Testis (tissue), 5 donors: ENCODE measurements at regions of chr2 and their contacts with region 1.

Region 1: DNA sequence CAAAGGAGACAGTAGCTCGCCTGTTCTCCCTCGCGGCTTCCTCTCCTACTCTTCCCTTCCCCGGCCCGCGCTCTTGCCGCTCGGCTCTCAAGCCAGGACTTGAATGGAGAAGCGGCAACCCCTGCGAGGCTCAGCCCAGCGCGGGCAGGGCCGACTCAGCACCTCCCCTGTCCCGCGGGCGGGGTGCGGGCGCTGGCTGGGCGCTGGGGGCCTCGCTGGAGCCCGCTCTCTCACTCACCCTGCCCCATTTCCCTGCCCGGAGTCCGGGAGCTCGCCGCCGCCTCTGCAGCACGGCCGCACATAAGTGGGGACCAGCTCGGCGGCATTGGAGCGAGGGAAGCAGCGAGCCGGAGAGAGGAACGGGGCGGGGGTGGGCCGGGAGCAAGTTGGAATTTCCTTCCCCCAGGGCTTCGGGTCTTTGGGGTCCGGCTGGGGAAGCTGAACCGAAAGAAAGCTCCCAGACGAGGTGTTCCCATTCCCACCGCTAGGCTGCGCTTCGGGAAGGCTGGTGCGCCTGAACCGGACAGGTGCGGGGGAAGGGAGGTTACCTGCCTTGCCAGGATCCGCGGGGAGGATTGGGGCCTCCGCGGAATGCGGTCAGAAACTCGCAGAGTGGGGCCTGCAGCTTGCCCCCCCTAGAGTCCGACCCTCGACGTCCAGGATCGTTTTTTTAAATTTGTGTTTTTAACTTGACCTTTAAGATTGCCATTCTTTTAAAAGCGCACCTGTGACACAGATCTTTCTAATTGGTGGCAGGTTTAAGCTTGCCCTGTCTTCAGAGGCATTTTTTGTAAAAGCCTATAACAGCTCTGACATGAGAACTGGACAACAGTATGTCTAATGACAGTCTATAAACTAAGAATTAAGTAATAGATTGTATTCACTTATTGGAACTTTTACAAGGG is at the start of gene COBLL1:
- DNase-seq: peak; percentile 84
- H3K4me3 ChIP-seq: peak within 1 kb of the TSS; percentile 69 to 78
- H3K27ac ChIP-seq: peak within 1 kb of the TSS; percentile 83 to 90
- H3K4me1 ChIP-seq: no peaks in the 10 kb centered on the region
- H3K27me3 ChIP-seq: no peaks in the 10 kb centered on the region
- CTCF ChIP-seq: peak; percentile 76 to 84 (median 84)
- POLR2A ChIP-seq: no peak
- total RNA-seq, gene COBLL1: 14.5 to 17.3 TPM

Region 2: DNA sequence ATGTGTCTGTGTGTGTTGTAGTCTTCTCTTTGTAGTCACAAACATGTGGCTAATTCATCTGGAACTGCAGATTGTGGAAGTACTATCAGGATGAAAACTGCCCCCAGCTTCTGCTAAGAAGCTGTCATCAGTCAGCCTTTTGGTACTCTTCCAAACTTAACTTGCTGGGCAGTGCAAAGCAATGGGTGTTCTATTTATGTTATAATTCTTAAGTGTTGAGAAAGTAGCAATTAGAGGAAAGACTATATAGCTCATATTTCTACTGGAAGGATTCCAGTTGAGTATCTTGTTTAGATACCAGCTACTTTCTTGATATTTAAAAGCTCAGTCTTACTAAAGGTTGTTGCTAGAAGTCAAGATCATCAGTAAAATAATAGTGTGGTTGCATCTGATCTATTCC is 61.2 kb after region 1 on chr2:
- intact Hi-C with region 1: loop called (anchors 10 kb)
- DNase-seq: no peak
- H3K4me3 ChIP-seq: no peak overlapping the region
- H3K27ac ChIP-seq: no peak overlapping the region
- H3K4me1 ChIP-seq: no peaks in the 10 kb centered on the region
- H3K27me3 ChIP-seq: no peaks in the 10 kb centered on the region
- CTCF ChIP-seq: no peak
- POLR2A ChIP-seq: no peak